IMR-90 (cell line): ENCODE measurements at regions of chr17 and their contacts with region 1.

Region 1: GRCh38 chr17:61201232-61201640 is 198.4 kb upstream of the TBX2 start:
- DNase-seq: peak; percentile 99
- ATAC-seq: peak; percentile 84
- H3K4me3 ChIP-seq: peak overlapping the region; percentile 17; the same call in 1 of the 2 replicates
- H3K27ac ChIP-seq: peak overlapping the region; percentile 84
- H3K4me1 ChIP-seq: peaks cover 14% of the 10 kb centered on the region
- H3K27me3 ChIP-seq: no peaks in the 10 kb centered on the region
- CTCF ChIP-seq: no peak
- POLR2A ChIP-seq: no peak
- RAD21 ChIP-seq: peak; percentile 21; the same call in 1 of the 2 replicates

Region 2: GRCh38 chr17:61002316-61002736 is 198.9 kb before region 1 on chr17:
- CTCF ChIA-PET with region 1: interaction called, 3 read pairs
- POLR2A ChIA-PET with region 1: no interaction called
- dilution Hi-C with region 1: no loop called
- in situ Hi-C with region 1: no loop called
- intact Hi-C with region 1: loop called (anchors 1 kb)
- DNase-seq: peak; percentile 79
- ATAC-seq: peak; percentile 75
- H3K4me3 ChIP-seq: no peak overlapping the region
- H3K27ac ChIP-seq: no peak overlapping the region
- H3K4me1 ChIP-seq: no peaks in the 10 kb centered on the region
- H3K27me3 ChIP-seq: no peaks in the 10 kb centered on the region
- CTCF ChIP-seq: peak; percentile 71
- POLR2A ChIP-seq: no peak
- RAD21 ChIP-seq: peak; percentile 84

Region 3: GRCh38 chr17:61157246-61157886 is 43.9 kb before region 1 on chr17:
- CTCF ChIA-PET with region 1: no interaction called
- POLR2A ChIA-PET with region 1: no interaction called
- dilution Hi-C with region 1: no loop called
- in situ Hi-C with region 1: loop called (anchors 5 kb)
- intact Hi-C with region 1: loop called (anchors 5 kb)
- DNase-seq: peak; percentile 71
- ATAC-seq: peak; percentile 80
- H3K4me3 ChIP-seq: peak overlapping the region; percentile 24; the same call in 1 of the 2 replicates
- H3K27ac ChIP-seq: peak overlapping the region; percentile 91; the same call in 1 of the 2 replicates
- H3K4me1 ChIP-seq: peaks cover 9% of the 10 kb centered on the region
- H3K27me3 ChIP-seq: no peaks in the 10 kb centered on the region
- CTCF ChIP-seq: 0 out of 2 replicates have a peak, but pooled peaks have one; percentile 12
- POLR2A ChIP-seq: no peak
- RAD21 ChIP-seq: peak; percentile 36

Region 4: GRCh38 chr17:61217878-61218837 is 16.9 kb after region 1 on chr17:
- CTCF ChIA-PET with region 1: interaction called, 4 read pairs
- POLR2A ChIA-PET with region 1: interaction called, 12 read pairs
- dilution Hi-C with region 1: no loop called
- in situ Hi-C with region 1: no loop called
- intact Hi-C with region 1: no loop called
- DNase-seq: peak; percentile 86
- ATAC-seq: peak; percentile 85
- H3K4me3 ChIP-seq: no peak overlapping the region
- H3K27ac ChIP-seq: peak overlapping the region; percentile 90
- H3K4me1 ChIP-seq: peaks cover 27% of the 10 kb centered on the region
- H3K27me3 ChIP-seq: no peaks in the 10 kb centered on the region
- CTCF ChIP-seq: no peak
- POLR2A ChIP-seq: no peak
- RAD21 ChIP-seq: no peak

Region 5: DNA sequence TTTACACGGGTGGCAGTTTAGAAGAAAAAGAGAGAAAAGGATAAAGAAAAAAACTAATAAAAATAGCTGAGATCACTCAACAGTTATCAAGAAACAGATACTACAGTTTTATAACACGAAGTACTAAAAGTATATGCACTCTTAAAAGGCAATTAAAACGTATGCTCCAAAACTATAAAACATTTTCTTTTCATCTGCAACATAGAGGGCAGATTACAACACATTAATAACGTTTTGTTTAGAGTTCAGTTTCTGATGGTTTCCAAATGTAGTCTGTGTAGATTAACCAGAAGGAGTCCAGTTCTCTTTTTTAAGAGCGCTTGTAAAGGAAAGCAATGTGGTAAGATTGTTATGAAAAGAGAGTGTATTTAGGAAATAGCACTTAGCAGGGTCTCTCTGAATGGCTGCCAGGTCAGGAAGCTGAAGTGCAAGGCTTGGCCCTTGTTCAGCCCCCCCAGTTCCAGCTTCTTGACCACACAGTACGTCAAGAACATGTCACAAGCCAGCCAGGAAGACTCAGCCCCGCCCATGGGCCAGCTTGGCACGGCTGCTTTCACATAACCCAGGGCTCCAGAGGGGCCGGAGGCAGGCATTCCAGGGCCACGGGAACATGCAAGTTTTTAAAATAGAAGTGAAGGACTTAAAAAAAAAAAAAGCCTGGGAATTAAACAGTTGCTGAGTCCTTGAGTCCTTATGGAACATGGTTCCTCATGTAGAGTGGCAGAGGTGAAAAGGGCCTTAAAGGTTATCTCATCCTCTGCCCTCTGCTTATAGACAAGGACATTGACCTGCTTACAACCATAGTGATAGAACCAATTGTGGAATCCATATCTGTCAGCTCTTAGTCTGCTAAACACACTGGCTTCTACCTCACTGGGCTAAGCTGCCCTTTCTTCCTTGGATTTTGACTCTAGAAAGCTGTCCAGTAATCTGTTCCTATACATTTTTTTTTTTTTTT is 51.0 kb after region 1 on chr17:
- CTCF ChIA-PET with region 1: no interaction called
- POLR2A ChIA-PET with region 1: no interaction called
- dilution Hi-C with region 1: no loop called
- in situ Hi-C with region 1: no loop called
- intact Hi-C with region 1: loop called (anchors 2 kb)
- DNase-seq: peak; percentile 99
- ATAC-seq: peak; percentile 83
- H3K4me3 ChIP-seq: no peak overlapping the region
- H3K27ac ChIP-seq: peak overlapping the region; percentile 80
- H3K4me1 ChIP-seq: peaks cover 18% of the 10 kb centered on the region
- H3K27me3 ChIP-seq: no peaks in the 10 kb centered on the region
- CTCF ChIP-seq: no peak
- POLR2A ChIP-seq: peak; percentile 52; the same call in 1 of the 2 replicates
- RAD21 ChIP-seq: peak; percentile 12; the same call in 1 of the 2 replicates

Region 6: GRCh38 chr17:61551255-61551742 is 350.1 kb after region 1 on chr17:
- CTCF ChIA-PET with region 1: no interaction called
- POLR2A ChIA-PET with region 1: no interaction called
- dilution Hi-C with region 1: no loop called
- in situ Hi-C with region 1: no loop called
- intact Hi-C with region 1: no loop called
- DNase-seq: peak; percentile 67
- ATAC-seq: peak; percentile 81
- H3K4me3 ChIP-seq: no peak overlapping the region
- H3K27ac ChIP-seq: no peak overlapping the region
- H3K4me1 ChIP-seq: no peaks in the 10 kb centered on the region; the same call in 1 of the 2 replicates
- H3K27me3 ChIP-seq: peaks cover 5% of the 10 kb centered on the region
- CTCF ChIP-seq: peak; percentile 88
- POLR2A ChIP-seq: no peak
- RAD21 ChIP-seq: peak; percentile 87